ENCODE measurements at regions of chr16 and their contacts with region 1.

Region 1: DNA sequence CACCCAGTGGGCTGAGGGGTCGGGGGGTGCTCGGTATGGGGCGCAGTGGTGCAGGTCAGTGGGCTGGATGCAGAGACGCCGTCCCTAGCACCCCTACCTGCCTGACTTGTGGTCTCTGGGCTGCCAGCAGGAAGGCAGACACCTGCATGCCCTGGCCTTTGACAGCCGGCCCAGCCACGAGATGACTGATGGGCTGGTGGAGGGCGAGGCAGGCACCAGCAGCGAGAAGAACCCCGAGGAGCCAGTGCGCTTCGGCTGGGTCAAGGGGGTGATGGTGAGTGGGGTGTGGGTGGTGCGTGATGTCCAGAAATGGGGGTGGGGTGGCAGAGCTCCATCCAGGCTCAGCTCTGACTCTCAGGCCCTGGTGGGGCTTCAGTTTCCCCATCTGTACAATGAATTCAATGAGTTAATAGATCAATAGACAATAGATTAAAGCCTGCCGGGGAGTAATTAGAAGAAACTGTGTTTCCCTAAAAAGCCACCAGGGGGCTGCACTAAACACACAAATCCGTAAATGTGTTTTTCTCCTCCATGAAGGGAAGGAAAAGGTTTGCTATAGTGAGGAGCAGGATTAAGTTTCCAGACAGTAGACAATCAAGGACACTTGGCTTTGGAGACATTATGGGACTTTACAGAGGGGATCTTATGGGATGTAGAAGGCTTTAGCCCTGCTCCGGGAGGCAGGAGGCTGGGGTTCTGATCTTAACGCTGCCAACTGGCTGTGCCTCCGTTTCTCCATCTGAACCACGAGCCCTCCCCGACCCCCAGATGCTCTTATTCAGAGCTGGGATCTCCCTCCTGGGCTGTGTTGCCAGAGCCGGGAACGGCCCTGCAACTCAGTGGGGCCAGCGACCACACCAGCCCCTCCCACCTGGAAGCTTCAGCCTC is 2.2 kb downstream of the SLC12A3 start:
- DNase-seq: peak; percentile 70
- ATAC-seq: peak; percentile 18

Region 2: GRCh38 chr16:56916571-56917403 is 49.6 kb after region 1 on chr16:
- intact Hi-C with region 1: loop called (anchors 5 kb)
- DNase-seq: no peak
- ATAC-seq: peak; percentile 14

Region 3: DNA sequence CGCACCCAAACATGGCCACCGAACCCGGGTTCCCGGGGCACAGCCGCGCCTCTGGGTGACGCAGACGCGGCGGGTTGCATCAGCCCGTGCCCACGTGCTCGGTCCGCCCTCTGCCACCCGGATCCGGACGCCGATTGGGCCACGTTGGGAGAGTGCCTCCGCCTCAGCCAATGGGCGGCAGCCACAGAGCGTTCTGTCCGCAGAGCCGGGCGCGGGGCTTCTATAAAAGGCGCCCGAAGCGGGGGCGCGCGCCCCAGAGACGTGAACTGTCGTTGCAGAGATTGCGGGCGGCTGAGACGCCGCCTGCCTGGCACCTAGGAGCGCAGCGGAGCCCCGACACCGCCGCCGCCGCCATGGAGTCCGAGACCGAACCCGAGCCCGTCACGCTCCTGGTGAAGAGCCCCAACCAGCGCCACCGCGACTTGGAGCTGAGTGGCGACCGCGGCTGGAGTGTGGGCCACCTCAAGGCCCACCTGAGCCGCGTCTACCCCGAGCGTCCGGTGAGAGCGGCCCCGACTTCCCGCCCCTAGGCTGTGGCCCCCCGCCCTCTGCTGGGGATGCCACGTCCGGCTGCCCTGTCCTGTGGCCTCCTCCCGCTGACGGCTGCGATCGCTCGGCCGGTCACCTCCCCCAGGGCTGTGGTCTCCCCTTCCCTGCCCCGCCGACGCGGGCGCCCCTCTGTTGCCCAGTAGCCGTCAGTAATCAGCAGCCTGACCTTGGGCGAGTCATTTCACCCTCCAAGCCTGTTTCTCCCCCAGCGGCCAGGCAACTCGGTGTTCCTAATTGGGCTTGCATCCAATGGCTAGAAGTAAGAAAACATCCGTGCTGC is 64.9 kb after region 1 on chr16 and contains the start of gene HERPUD1:
- intact Hi-C with region 1: loop called (anchors 5 kb)
- DNase-seq: peak; percentile 99
- ATAC-seq: peak; percentile 97
- total RNA-seq, gene HERPUD1: 114 TPM

Region 4: DNA sequence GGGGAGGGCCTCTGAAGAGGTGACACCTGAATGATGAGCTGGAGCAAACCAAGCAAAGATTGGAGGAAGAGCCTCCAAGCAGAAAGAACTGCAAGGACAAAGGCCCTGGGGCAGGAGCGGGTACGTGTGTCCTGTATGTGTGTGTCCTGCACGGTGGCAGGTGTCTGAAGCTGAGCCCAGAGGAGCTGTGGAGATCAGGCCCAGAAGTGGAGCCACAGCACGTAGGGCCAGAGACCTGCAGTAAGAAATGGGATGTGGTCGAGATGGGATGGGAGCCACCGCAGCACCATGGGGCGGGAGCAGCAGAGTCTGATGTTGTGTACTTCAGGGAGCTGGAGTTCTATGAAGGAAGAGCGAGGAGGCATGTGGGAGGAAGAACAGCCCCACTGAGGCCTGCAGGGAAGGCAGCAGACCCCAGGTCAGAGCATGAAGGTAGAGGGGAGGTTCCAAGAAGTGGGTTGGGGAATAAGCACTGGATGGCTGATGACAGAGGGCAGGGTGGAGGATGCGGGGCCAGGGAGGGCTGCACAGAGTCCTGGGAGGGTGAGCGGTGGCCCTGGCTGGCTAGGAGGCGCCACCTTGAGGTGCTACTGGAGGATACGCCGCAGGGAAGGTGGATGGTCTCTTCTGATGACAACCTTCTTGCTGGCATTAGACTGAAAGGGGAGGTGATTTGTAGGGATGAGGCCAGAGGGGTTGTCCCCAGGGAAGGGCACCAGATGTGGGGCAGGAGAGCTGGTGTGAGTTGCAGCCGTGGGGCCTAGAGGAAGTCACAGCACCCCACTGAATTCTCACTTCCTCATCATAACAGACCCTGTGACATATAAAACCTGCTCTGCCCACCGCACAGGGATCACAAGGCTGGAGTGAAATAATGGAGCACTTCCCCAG is 83.9 kb after region 1 on chr16:
- intact Hi-C with region 1: loop called (anchors 1 kb)
- DNase-seq: no peak
- ATAC-seq: peak; percentile 75

Region 5: GRCh38 chr16:57045694-57046381 is 178.7 kb after region 1 on chr16:
- intact Hi-C with region 1: loop called (anchors 1 kb)
- DNase-seq: peak; percentile 81
- ATAC-seq: peak; percentile 75

Region 6: GRCh38 chr16:57147381-57148221 is 280.4 kb after region 1 on chr16:
- intact Hi-C with region 1: no loop called
- DNase-seq: no peak
- ATAC-seq: no peak

Measured in Right ventricle myocardium inferior (tissue), 1 donor.